ENCODE measurements at regions of chr15 and their contacts with region 1.

Region 1: DNA sequence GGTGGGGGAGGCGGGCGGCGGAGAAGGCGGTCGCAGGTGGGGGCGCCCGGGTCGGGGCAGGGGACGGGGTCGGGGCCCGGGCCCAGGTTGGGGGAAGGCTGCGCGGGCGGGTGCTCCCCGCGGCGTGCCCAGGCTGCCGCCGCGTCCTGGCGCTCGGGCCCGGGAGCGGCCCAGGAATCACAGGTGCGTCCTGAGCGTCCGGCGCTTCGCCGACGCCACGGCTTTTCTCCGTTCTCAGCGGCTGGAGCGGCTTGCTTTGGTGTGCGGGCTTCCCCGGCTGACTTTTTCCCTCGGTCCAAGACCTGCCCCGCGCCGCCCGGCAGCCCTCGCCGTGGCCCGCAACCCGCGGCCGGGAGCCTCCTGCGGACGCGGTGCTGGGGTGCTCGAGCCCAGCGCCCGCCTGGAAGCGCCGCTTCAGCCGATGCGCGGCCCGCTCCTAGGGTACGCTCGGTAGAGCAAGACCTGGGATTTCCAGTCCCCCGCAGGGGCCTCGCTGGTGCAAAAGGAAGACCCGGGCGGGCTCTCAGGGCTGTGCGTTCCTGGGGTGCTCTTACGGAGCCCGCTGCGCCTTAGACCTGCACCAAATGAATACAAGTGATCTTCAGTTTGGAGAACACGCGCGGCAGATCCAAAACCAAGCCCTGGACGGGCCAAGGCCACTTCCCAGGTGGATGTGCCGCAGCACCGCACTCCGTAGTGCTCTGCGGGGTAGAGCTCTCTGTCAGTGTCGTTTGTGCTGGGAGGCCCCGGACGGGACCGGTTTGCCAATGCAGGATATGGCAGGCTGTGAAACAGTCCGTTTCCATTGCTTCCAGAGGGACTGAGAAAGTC is 639 bp downstream of the NIPA1 start:
- DNase-seq: peak; percentile 22
- ATAC-seq: peak; percentile 27

Region 2: GRCh38 chr15:22827125-22827524 is 40.0 kb after region 1 on chr15:
- intact Hi-C with region 1: no loop called
- DNase-seq: no peak
- ATAC-seq: no peak

Region 3: DNA sequence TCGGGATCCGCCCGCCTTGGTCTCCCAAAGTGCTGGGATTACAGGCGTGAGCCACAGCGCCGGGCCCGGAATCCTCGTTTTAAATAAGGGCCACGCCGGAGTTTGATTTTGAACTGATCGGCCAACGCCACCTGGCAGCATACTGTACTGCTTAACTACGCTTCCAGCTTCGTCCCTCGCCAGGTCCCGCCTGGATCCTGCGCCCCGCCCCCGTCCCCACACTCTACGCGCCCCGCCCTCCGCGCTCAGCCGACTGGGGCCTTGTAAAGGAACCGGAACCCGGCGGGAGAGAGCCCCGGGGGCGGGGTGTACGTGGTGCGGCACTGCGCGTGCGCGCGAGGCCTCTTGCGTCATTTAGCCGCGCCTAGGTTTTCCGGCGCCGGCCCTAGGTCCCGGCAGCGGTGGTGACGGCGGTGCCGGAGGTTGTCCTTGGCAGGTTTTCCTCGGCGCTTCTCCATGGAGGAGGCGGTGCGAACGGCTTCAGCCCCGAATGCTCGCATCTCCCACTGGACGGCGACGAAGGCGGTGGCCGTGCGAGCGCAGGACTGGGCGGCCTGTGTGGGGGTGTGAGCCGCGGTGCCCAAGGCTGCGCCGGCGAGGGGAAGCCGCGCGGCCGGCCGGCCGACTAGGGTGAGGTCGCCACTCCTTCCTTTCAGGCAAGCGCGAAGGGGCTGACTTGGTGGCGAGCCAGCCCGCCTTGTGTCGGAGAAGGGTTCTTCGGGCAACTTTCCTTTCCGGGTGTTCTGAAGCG is 51.4 kb after region 1 on chr15 and contains the start of gene NIPA2:
- intact Hi-C with region 1: loop called (anchors 1 kb)
- DNase-seq: peak; percentile 100
- ATAC-seq: peak; percentile 99
- total RNA-seq, gene NIPA2: 22.6 TPM

Region 4: GRCh38 chr15:22861161-22861560 is 74.1 kb after region 1 on chr15:
- intact Hi-C with region 1: no loop called
- DNase-seq: no peak
- ATAC-seq: no peak

Region 5: DNA sequence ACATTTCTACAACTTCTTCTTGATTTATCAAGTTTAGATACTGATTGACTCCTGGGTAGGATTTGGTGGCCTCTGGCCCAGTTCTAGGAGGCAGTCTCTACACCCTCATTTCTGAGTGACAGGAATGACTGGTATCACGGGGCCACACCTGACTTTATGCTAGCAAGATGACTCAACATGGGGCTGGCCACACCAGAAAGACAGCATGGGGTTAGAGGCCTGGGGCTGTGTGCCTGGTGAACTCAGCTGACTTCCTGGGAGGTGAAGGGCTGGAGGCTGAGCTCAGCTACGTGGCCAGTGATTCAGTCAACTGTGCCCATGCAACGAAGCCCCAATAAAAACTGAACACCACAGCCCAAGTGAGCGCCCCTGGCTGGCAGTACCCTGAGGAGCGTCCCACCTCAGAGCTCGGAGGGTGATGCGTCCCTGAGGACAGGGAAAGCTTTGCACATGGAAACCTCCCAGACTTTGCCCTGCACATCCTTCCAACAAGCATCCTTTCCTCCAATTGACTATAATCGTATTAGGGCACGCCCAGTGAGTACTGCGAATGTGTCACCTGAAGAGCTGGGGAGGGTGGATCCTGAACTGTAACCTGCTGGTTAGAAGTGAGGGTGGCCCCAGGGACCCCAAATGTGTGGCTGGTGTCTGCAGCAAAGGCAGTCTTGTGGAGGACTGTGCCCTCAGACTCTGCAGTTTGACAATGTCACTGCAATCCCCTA is 108.5 kb after region 1 on chr15:
- intact Hi-C with region 1: no loop called
- DNase-seq: no peak
- ATAC-seq: no peak